Gastrocnemius medialis (tissue), 4 donors: ENCODE measurements at regions of chr9 and their contacts with region 1.

Region 1: GRCh38 chr9:34493972-34494535 is 28.7 kb downstream of the ENHO start:
- DNase-seq: no peak
- ATAC-seq: peak in 1 of 2 donors; percentile 49
- H3K4me3 ChIP-seq: no peak overlapping the region
- H3K27ac ChIP-seq: no peak overlapping the region
- H3K4me1 ChIP-seq: no peaks in the 10 kb centered on the region
- H3K27me3 ChIP-seq: no peaks in the 10 kb centered on the region
- CTCF ChIP-seq: no peak
- POLR2A ChIP-seq: no peak

Region 2: GRCh38 chr9:34403554-34404380 is 90.3 kb before region 1 on chr9:
- in situ Hi-C with region 1: loop called in 2 of 4 experiments (anchors 5 to 10 kb)
- intact Hi-C with region 1: no loop called
- DNase-seq: peak; percentile 42 to 68
- ATAC-seq: peak; percentile 70 to 79
- H3K4me3 ChIP-seq: no peak overlapping the region
- H3K27ac ChIP-seq: no peak overlapping the region
- H3K4me1 ChIP-seq: peaks cover 0 to 3% of the 10 kb centered on the region in 2 donors
- H3K27me3 ChIP-seq: no peaks in the 10 kb centered on the region
- CTCF ChIP-seq: peak; percentile 90 to 98 (median 95)
- POLR2A ChIP-seq: no peak

Region 3: GRCh38 chr9:34417734-34418133 is 76.3 kb before region 1 on chr9:
- in situ Hi-C with region 1: no loop called
- intact Hi-C with region 1: no loop called
- DNase-seq: no peak
- ATAC-seq: no peak
- H3K4me3 ChIP-seq: no peak overlapping the region
- H3K27ac ChIP-seq: no peak overlapping the region
- H3K4me1 ChIP-seq: peaks cover 0 to 8% of the 10 kb centered on the region in 2 donors
- H3K27me3 ChIP-seq: no peaks in the 10 kb centered on the region
- CTCF ChIP-seq: no peak
- POLR2A ChIP-seq: no peak

Region 4: DNA sequence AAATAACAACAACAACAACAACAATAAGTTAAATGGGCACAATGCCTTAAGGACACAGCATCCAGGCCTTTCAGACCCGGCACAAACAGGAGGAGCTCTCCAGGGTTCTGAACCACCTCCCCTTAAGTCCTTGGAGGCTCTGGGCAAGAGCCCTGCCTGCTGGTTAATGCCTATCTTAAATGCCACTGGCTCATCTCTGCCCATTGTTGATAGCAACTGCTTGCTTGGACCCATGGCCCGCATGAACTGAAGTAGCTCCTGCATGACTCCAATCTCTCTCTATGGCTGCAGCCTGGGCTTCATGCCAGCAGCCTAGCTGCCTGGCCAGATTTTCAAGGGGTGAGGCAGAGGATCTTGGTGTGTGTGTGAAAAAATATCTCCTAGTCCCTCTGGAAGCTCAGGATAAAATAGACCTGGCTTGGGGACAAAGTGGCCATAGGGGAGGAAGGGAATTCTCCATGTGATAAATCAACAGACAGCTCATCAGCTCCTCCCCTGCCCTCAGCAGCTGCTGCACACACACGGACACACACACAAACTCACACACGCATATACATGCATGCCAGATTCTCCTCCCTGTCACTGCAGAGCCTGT is 63.1 kb before region 1 on chr9:
- in situ Hi-C with region 1: loop called in 2 of 4 experiments (anchors 5 to 10 kb)
- intact Hi-C with region 1: no loop called
- DNase-seq: peak; percentile 56 to 87
- ATAC-seq: peak; percentile 91 to 93
- H3K4me3 ChIP-seq: no peak overlapping the region
- H3K27ac ChIP-seq: peak overlapping the region in 2 of 4 donors; percentile 61 to 71
- H3K4me1 ChIP-seq: peaks cover 20 to 39% of the 10 kb centered on the region in 2 donors
- H3K27me3 ChIP-seq: no peaks in the 10 kb centered on the region
- CTCF ChIP-seq: no peak
- POLR2A ChIP-seq: no peak

Region 5: GRCh38 chr9:34437006-34437925 is 56.8 kb before region 1 on chr9:
- in situ Hi-C with region 1: loop called in 2 of 4 experiments (anchors 5 to 10 kb)
- intact Hi-C with region 1: no loop called
- DNase-seq: peak in 1 of 2 donors; percentile 51
- ATAC-seq: peak; percentile 78 to 80
- H3K4me3 ChIP-seq: no peak overlapping the region
- H3K27ac ChIP-seq: no peak overlapping the region
- H3K4me1 ChIP-seq: peaks cover 19 to 41% of the 10 kb centered on the region in 2 donors
- H3K27me3 ChIP-seq: no peaks in the 10 kb centered on the region
- CTCF ChIP-seq: peak; percentile 69 to 78 (median 70)
- POLR2A ChIP-seq: no peak

Region 6: GRCh38 chr9:34512131-34513078 is 18.4 kb after region 1 on chr9:
- in situ Hi-C with region 1: no loop called
- intact Hi-C with region 1: no loop called
- DNase-seq: no peak
- ATAC-seq: no peak
- H3K4me3 ChIP-seq: no peak overlapping the region
- H3K27ac ChIP-seq: no peak overlapping the region
- H3K4me1 ChIP-seq: peaks cover 0 to 6% of the 10 kb centered on the region in 2 donors
- H3K27me3 ChIP-seq: no peaks in the 10 kb centered on the region
- CTCF ChIP-seq: no peak
- POLR2A ChIP-seq: no peak